GM12878 (cell line): ENCODE measurements at regions of chr22 and their contacts with region 1.

Region 1: DNA sequence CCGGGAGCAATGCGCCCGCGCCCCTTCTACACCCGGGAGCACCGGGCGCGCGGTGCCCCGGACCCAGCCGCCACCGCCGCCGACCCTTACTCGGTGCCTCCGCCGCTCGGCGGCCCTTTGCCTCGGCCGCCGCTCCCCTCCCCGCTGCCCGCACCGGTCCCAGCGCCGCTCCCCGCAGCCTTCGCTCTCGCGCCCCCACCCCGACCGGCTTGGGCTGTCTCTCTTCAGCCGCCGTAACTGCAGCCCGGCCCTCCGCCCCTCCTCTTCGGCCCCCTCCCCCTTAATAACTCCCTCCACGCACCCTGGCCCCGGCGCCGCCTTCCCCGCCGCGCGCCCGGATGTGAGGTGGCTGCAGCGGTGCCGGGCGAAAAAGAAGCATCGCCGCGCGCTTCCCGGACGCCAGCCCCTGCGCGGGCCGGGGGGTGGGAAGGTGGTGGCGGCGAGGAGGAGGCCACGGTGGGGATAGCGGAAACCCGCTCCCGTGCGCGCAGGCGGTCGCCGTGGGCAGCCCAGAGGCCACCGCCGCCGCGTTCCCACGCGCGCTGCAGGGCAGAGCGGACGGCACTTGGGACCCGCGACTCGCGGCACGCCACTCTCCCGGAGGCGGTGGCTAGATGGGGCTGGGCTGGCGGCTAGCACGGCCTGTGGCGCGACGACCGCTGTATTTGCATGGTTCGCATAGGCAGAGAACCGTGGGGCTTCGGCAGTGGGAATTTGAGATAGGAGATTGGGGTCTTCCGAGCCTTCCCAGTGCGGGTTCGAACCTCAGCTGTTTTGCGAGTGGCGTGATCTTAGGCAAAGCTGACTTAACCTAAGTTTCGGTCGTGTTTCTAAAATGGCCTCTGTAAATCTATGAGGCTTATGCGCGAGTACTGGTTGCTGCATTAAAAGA is at the start of gene EIF4ENIF1:
- DNase-seq: no peak
- ATAC-seq: peak; percentile 68
- H3K4me3 ChIP-seq: peak within 1 kb of the TSS; percentile 88
- H3K27ac ChIP-seq: peak within 1 kb of the TSS; percentile 99
- H3K4me1 ChIP-seq: peaks cover 35% of the 10 kb centered on the region
- H3K27me3 ChIP-seq: no peaks in the 10 kb centered on the region
- CTCF ChIP-seq: no peak
- EP300 ChIP-seq: no peak
- POLR2A ChIP-seq: peak; percentile 87
- RAD21 ChIP-seq: no peak
- polyA plus RNA-seq, gene EIF4ENIF1: 4.4 to 7.4 TPM

Region 2: GRCh38 chr22:31451709-31452571 is 37.9 kb before region 1 on chr22:
- CTCF ChIA-PET with region 1: interaction called, 12 read pairs
- POLR2A ChIA-PET with region 1: interaction called, 3 read pairs
- RAD21 ChIA-PET with region 1: interaction called, 10 read pairs
- SMC1A ChIA-PET with region 1: interaction called, 12 read pairs
- in situ Hi-C with region 1: no loop called
- intact Hi-C with region 1: no loop called
- DNase-seq: peak; percentile 15
- ATAC-seq: peak; percentile 92
- H3K4me3 ChIP-seq: no peak overlapping the region
- H3K27ac ChIP-seq: no peak overlapping the region
- H3K4me1 ChIP-seq: peaks cover 6% of the 10 kb centered on the region
- H3K27me3 ChIP-seq: no peaks in the 10 kb centered on the region
- CTCF ChIP-seq: peak; percentile 59 to 63 (median 59)
- EP300 ChIP-seq: no peak
- POLR2A ChIP-seq: no peak
- RAD21 ChIP-seq: peak; percentile 59

Region 3: DNA sequence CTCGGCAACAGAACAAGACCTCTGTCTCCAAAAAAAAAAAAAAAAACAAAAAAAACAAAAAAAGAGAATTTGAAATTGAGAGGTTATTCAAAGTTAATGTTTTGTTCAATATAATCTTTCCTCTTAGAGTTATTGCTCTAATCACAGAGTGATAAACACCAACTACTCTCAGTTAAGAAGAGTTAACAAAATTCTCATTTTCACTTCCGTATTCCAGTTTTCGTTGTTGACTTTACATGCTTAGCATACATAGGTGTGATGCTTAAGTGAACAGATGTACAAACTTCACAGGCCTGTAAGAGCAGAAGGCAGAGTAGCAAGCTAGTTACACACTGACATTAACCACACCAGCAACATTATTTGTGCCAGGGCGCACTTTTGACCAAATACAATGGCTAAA is 12.5 kb before region 1 on chr22:
- CTCF ChIA-PET with region 1: interaction called, 4 read pairs
- POLR2A ChIA-PET with region 1: interaction called, 5 read pairs
- RAD21 ChIA-PET with region 1: interaction called, 6 read pairs
- SMC1A ChIA-PET with region 1: interaction called, 12 read pairs
- in situ Hi-C with region 1: no loop called
- intact Hi-C with region 1: no loop called
- DNase-seq: peak; percentile 56
- ATAC-seq: peak; percentile 98
- H3K4me3 ChIP-seq: no peak overlapping the region
- H3K27ac ChIP-seq: peak overlapping the region; percentile 65
- H3K4me1 ChIP-seq: peaks cover 19% of the 10 kb centered on the region
- H3K27me3 ChIP-seq: no peaks in the 10 kb centered on the region
- CTCF ChIP-seq: no peak
- EP300 ChIP-seq: peak in 1 of 2 experiments; percentile 33; a peak in 1 of 4 replicates
- POLR2A ChIP-seq: no peak
- RAD21 ChIP-seq: no peak

Region 4: DNA sequence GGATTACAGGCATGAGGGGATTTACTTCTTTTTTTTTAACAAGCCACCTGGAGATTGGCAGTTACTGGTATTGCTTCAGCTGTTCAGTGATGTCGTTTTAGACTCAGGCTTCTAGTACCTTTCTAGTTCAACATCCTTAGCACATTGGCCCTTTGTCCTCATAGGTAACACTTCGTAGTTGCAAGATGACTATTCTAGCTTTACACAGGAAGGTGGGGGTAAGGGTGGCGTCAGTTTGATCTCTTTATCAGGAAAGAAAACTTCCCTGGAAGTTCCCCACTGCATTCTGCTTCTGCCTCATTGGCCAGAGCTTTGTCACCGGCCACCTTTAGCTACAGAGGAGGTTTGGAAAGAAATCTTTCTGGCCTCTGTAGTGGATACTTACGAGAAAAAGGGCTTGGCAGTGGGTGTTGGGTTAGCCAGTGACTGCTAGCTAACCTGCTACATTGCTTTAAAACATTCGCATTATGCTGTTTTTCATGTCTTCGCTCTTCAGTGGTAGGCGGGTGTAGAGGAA is 47.2 kb after region 1 on chr22:
- CTCF ChIA-PET with region 1: interaction called, 13 read pairs
- POLR2A ChIA-PET with region 1: interaction called, 82 read pairs
- RAD21 ChIA-PET with region 1: interaction called, 15 read pairs
- SMC1A ChIA-PET with region 1: interaction called, 29 read pairs
- in situ Hi-C with region 1: no loop called
- intact Hi-C with region 1: loop called (anchors 5 kb)
- DNase-seq: peak; percentile 79
- ATAC-seq: peak; percentile 91
- H3K4me3 ChIP-seq: no peak overlapping the region
- H3K27ac ChIP-seq: peak overlapping the region; percentile 87
- H3K4me1 ChIP-seq: peaks cover 34% of the 10 kb centered on the region
- H3K27me3 ChIP-seq: no peaks in the 10 kb centered on the region
- CTCF ChIP-seq: no peak
- EP300 ChIP-seq: peak; percentile 82 to 88; a peak in 3 of 4 replicates
- POLR2A ChIP-seq: no peak
- RAD21 ChIP-seq: no peak

Region 5: GRCh38 chr22:31544481-31545480 is 54.9 kb after region 1 on chr22:
- CTCF ChIA-PET with region 1: interaction called, 10 read pairs
- POLR2A ChIA-PET with region 1: interaction called, 82 read pairs
- RAD21 ChIA-PET with region 1: interaction called, 14 read pairs
- SMC1A ChIA-PET with region 1: interaction called, 29 read pairs
- in situ Hi-C with region 1: no loop called
- intact Hi-C with region 1: loop called (anchors 5 kb)
- DNase-seq: no peak
- ATAC-seq: no peak
- H3K4me3 ChIP-seq: no peak overlapping the region
- H3K27ac ChIP-seq: peak overlapping the region; percentile 61
- H3K4me1 ChIP-seq: peaks cover 15% of the 10 kb centered on the region
- H3K27me3 ChIP-seq: no peaks in the 10 kb centered on the region
- CTCF ChIP-seq: no peak
- EP300 ChIP-seq: no peak
- POLR2A ChIP-seq: no peak
- RAD21 ChIP-seq: no peak

Region 6: DNA sequence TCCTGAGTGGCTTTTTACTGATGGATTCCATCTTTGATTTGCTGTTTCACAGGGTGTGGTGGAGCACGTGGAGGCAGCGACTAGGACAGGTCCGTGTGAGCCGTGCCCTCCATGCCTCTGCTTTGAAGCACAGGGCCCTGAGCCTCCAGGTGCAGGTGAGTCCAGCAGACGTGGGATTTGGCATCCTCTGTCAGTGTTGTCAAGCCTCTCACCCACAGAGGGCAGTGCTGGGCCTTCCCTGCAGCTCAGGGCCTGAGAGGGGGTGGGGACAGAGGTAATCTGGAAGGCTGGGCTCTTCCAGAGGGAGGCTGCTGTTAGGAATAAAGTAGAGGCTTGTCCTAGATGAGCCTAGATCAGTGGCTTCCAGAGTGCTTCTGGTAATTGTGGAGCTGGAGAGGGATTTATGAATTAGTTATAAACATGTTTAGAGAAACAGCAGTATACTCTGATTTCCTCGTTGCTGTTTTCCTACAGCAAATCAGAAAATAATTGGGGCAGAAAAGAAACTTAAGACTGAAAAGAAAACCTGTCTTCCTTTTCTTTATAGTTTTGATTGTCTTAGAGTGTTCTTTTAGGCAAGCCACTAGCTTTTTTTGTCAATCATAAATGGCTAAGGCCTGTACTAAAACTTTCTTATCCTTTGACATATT is 71.5 kb after region 1 on chr22:
- CTCF ChIA-PET with region 1: interaction called, 10 read pairs
- POLR2A ChIA-PET with region 1: interaction called, 8 read pairs
- RAD21 ChIA-PET with region 1: interaction called, 4 read pairs
- SMC1A ChIA-PET with region 1: interaction called, 10 read pairs
- in situ Hi-C with region 1: no loop called
- intact Hi-C with region 1: no loop called
- DNase-seq: no peak
- ATAC-seq: peak; percentile 99
- H3K4me3 ChIP-seq: no peak overlapping the region
- H3K27ac ChIP-seq: no peak overlapping the region; the same call in 1 of the 2 replicates
- H3K4me1 ChIP-seq: no peaks in the 10 kb centered on the region
- H3K27me3 ChIP-seq: no peaks in the 10 kb centered on the region
- CTCF ChIP-seq: peak; percentile 69 to 87 (median 83)
- EP300 ChIP-seq: no peak
- POLR2A ChIP-seq: 0 out of 2 replicates have a peak, but pooled peaks have one; percentile 22
- RAD21 ChIP-seq: peak; percentile 78

Region 7: DNA sequence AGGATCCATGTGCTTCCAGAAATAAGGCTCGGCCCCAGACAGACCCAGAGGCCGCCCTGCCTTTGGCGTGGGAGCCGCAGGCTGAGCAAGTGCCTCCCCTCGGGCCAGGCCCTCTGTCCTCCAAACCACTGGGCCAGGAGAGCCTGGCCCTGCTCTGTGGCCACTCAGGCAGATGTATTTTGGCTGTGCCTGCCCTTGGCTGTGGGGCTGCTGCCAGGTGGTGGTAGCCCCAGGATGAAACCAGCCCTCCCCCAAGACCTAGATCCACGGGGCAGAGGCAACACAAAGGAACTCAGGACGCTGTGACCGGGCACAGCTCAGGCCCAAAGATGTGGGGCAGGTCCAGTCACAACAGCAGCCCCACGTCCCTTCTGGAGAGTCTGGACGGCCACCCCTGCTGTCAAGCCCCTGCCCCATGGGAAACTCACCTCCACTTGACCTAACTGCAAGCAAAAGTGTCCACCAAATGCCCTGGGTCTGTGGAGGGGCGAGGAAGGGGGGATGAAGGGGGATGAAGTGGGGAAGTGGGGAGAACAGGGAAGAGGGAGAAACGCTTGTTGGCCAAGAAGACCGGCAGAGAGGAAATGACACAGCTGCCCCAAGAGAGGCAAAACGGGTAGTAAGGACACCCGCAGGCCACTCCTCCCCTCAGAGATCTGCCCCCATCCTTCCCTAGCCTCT is 148.2 kb after region 1 on chr22:
- CTCF ChIA-PET with region 1: interaction called, 8 read pairs
- POLR2A ChIA-PET with region 1: interaction called, 4 read pairs
- RAD21 ChIA-PET with region 1: interaction called, 3 read pairs
- SMC1A ChIA-PET with region 1: interaction called, 4 read pairs
- in situ Hi-C with region 1: loop called (anchors 5 kb)
- intact Hi-C with region 1: loop called (anchors 5 kb)
- DNase-seq: no peak
- ATAC-seq: peak; percentile 83
- H3K4me3 ChIP-seq: peak overlapping the region; percentile 71
- H3K27ac ChIP-seq: peak overlapping the region; percentile 98
- H3K4me1 ChIP-seq: peaks cover 52% of the 10 kb centered on the region
- H3K27me3 ChIP-seq: no peaks in the 10 kb centered on the region
- CTCF ChIP-seq: no peak
- EP300 ChIP-seq: 0 out of 4 replicates have a peak, but pooled peaks of 1 of the 2 experiments have one; percentile 9
- POLR2A ChIP-seq: 0 out of 2 replicates have a peak, but pooled peaks have one; percentile 56
- RAD21 ChIP-seq: no peak